ENCODE measurements at regions of chr20 and their contacts with region 1.

Region 1: DNA sequence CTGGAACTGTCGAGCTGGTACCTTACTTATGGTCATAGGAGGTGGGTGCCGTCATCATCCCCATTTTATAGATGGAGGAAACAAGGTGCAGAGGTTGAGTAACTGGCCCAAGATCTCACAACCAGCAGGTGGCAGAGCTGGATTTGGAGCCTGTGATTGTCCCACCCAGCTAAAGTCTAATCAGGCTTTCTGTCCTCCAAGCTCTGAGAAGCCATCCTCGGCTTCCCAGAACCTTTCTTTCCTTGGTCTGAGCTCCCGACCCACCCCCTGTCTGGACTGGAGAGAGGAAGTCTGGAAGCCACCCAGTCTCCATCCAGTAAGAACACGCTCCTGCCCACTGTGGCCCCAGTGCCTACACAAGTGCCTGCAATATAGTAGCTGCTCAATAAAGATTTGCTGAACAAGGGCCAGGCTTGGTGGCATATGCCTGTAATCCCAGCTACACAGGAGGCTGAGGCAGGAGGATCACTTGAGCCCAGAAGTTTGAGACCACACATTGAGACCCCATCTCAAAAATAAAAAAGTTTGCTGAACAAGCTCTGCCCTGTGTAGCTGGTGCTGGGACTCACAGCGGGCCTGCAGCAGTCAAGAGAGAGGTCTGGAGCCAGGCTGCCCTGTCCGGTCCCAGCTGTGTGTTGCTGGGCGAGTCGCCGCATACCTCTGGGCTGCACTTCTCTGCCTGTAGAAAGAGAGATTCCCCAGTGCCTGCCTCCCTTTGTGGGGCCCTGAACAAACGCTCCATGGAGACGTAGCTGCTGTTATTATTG is 32.5 kb upstream of the DLGAP4 start:
- DNase-seq: peak; percentile 23
- ATAC-seq: no peak
- H3K4me3 ChIP-seq: no peak overlapping the region
- H3K4me3 Mint-ChIP-seq: no peak overlapping the region
- H3K27ac ChIP-seq: no peak overlapping the region
- H3K27ac Mint-ChIP-seq: no peak overlapping the region
- H3K4me1 ChIP-seq: no peaks in the 10 kb centered on the region
- H3K4me1 Mint-ChIP-seq: no peaks in the 10 kb centered on the region
- H3K27me3 ChIP-seq: peaks cover 0 to 8% (median 0%) of the 10 kb centered on the region in 4 experiments
- H3K27me3 Mint-ChIP-seq: peaks cover 18% of the 10 kb centered on the region
- CTCF ChIP-seq: peak; percentile 21

Region 2: DNA sequence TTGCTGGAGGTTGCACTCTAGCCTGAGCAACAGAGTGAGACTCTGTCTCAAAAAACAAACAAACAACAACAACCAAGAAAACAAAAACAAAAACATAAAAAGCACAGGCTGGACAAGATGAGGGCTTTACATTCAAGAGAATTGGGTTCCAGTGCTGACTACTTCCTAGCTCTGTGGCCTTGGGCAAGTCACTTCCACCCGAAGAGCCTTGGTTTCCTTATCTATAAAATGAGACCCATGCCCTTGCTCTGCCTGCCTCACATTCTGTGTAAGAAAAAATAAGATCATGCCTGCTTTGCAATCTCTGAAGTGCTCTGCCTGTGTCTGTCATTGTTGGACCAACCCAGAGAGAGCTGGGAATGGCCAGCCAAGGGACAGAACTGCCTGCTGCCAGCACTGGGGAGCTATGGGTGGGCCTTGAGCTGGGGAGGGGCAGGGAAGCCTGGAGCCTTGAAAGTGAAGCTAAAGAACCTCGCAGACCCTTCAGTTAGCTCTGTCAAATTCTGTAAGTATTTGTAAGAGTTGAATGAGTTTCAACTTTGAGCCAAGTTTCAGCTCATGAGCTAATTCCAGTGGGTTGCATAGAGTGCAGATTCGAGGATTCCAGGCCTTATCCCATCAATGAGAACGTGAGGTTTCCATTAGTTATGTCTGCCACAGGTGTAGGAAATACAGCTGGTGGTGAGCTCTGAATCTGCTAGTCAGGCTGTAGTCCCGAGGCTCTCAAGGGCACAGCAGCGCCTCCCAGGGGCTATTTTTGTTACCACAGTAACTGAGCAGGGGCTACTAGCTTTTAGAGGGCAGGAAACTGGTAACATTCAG is 125.8 kb after region 1 on chr20:
- CTCF ChIA-PET with region 1: no interaction called
- POLR2A ChIA-PET with region 1: no interaction called
- intact Hi-C with region 1: no loop called
- DNase-seq: peak; percentile 14
- ATAC-seq: no peak
- H3K4me3 ChIP-seq: no peak overlapping the region
- H3K4me3 Mint-ChIP-seq: no peak overlapping the region
- H3K27ac ChIP-seq: no peak overlapping the region
- H3K27ac Mint-ChIP-seq: no peak overlapping the region
- H3K4me1 ChIP-seq: peaks cover 0 to 5% of the 10 kb centered on the region in 2 donors
- H3K4me1 Mint-ChIP-seq: no peaks in the 10 kb centered on the region
- H3K27me3 ChIP-seq: peaks cover 0 to 30% (median 11%) of the 10 kb centered on the region in 4 experiments
- H3K27me3 Mint-ChIP-seq: peaks cover 53% of the 10 kb centered on the region
- CTCF ChIP-seq: peak; percentile 35

Region 3: GRCh38 chr20:36439040-36439730 is 165.6 kb after region 1 on chr20:
- CTCF ChIA-PET with region 1: interaction called, 20 read pairs
- POLR2A ChIA-PET with region 1: no interaction called
- intact Hi-C with region 1: no loop called
- DNase-seq: peak; percentile 68
- ATAC-seq: peak; percentile 32
- H3K4me3 ChIP-seq: no peak overlapping the region
- H3K4me3 Mint-ChIP-seq: no peak overlapping the region
- H3K27ac ChIP-seq: no peak overlapping the region
- H3K27ac Mint-ChIP-seq: no peak overlapping the region
- H3K4me1 ChIP-seq: peaks cover 0 to 11% of the 10 kb centered on the region in 2 donors
- H3K4me1 Mint-ChIP-seq: peaks cover 9% of the 10 kb centered on the region
- H3K27me3 ChIP-seq: peaks cover 0 to 12% (median 0%) of the 10 kb centered on the region in 4 experiments
- H3K27me3 Mint-ChIP-seq: peaks cover 4% of the 10 kb centered on the region
- CTCF ChIP-seq: peak; percentile 84

Measured in B cell (primary cell).